ENCODE measurements at regions of chr3 and their contacts with region 1.

Region 1: GRCh38 chr3:128068211-128068620 is 16.0 kb downstream of the SEC61A1 start:
- DNase-seq: peak in 1 of 2 experiments; percentile 69
- H3K4me3 ChIP-seq: no peak overlapping the region
- H3K4me3 Mint-ChIP-seq: no peak overlapping the region
- H3K27ac Mint-ChIP-seq: peak overlapping the region; percentile 66
- H3K4me1 ChIP-seq: no peaks in the 10 kb centered on the region
- H3K4me1 Mint-ChIP-seq: peaks cover 6% of the 10 kb centered on the region
- H3K27me3 ChIP-seq: no peaks in the 10 kb centered on the region
- H3K27me3 Mint-ChIP-seq: no peaks in the 10 kb centered on the region
- CTCF ChIP-seq: peak; percentile 48 to 68

Region 2: GRCh38 chr3:128051837-128052594 is 16.2 kb before region 1 on chr3 and contains the start of gene SEC61A1:
- CTCF ChIA-PET with region 1: no interaction called
- POLR2A ChIA-PET with region 1: interaction called, 13 read pairs
- intact Hi-C with region 1: no loop called
- DNase-seq: peak; percentile 93 to 97
- H3K4me3 ChIP-seq: peak within 1 kb of the TSS; percentile 98
- H3K4me3 Mint-ChIP-seq: peak within 1 kb of the TSS; percentile 97
- H3K27ac Mint-ChIP-seq: peak within 1 kb of the TSS; percentile 95
- H3K4me1 ChIP-seq: peaks cover 15% of the 10 kb centered on the region
- H3K4me1 Mint-ChIP-seq: peaks cover 28% of the 10 kb centered on the region
- H3K27me3 ChIP-seq: no peaks in the 10 kb centered on the region
- H3K27me3 Mint-ChIP-seq: peaks cover 1% of the 10 kb centered on the region
- CTCF ChIP-seq: no peak
- total RNA-seq, gene SEC61A1: 176 and 178 TPM in 2 replicates

Region 3: GRCh38 chr3:128133273-128134084 is 65.3 kb after region 1 on chr3:
- CTCF ChIA-PET with region 1: interaction called, 3 read pairs
- POLR2A ChIA-PET with region 1: no interaction called
- intact Hi-C with region 1: loop called (anchors 1 kb)
- DNase-seq: peak in 1 of 2 experiments; percentile 63
- H3K4me3 ChIP-seq: no peak overlapping the region
- H3K4me3 Mint-ChIP-seq: no peak overlapping the region
- H3K27ac Mint-ChIP-seq: no peak overlapping the region
- H3K4me1 ChIP-seq: no peaks in the 10 kb centered on the region
- H3K4me1 Mint-ChIP-seq: no peaks in the 10 kb centered on the region
- H3K27me3 ChIP-seq: no peaks in the 10 kb centered on the region
- H3K27me3 Mint-ChIP-seq: peaks cover 7% of the 10 kb centered on the region
- CTCF ChIP-seq: peak; percentile 46 to 59

Measured in Caco-2 (cell line).